Cardiac septum (tissue), 1 donor: ENCODE measurements at regions of chr12 and their contacts with region 1.

Region 1: DNA sequence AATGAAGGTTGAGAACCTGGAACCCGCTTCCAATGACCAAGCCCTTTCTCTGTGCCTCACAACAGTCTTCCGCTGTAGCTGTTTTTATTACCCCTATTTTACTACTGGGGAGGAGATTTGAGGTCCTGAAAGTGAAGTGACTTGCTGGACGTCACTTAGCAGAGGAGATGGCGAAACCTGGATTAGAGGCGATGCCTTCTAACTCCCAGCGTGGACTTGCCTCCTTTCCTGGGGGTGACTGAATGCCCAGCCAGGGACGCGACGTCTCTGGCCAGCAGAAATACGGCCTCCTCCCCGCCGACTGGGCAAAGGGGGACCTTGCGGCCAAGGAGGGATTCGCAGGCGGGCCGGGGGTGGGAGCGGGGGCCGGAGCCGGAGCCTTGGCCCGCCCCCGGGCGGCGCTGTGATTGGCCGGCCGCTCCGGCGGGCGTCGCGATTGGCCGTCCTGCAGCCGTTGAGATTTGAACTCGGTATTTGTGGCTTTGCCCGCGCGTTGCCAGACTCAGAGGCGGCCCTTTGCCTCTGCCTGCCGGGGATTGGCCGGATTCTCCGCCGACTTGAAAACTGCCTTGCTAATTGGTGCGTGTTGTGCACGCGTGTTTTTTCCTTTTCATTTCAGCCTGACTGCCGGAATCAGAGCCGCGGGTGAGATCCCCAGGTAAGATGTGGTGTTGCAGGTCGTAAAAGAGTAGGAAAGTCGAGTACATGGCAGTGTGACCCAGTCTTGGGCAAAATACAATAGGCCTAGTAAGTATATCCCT is at the start of gene NCAPD2:
- DNase-seq: peak; percentile 98
- total RNA-seq, gene NCAPD2: 12.0 TPM

Region 2: DNA sequence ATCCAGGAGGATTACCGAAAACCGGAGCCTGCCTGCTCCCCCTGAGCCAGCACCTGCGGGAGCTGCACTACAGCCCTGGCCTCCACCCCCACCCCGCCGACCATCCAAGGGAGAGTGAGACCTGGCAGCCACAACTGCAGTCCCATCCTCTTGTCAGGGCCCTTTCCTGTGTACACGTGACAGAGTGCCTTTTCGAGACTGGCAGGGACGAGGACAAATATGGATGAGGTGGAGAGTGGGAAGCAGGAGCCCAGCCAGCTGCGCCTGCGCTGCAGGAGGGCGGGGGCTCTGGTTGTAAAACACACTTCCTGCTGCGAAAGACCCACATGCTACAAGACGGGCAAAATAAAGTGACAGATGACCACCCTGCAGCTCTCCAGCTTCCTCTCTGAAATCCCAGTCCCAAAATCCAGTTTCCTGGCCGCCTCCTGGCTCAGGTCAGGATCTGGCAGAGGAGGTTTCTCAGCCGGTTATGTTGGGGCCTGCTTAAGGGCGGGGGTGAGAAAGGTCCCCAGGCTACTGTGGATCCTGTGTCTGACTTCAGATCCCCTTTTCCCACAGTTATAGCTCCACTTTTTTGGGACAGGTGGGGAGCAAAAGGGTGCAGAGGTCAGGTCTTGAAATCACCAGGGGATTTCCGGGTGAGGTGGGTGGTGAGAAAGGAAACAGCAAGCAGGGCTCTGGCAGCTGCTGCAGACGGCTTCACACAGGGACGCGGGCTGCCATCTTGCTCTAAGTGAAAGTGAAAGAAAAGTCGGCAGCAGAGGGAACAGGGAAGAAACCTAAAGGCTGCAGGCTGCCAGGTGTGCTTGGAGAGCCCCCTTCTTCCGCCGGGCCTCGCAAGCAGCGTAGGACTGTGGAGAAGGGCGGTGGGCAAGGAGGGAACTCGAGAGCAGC is 42.1 kb before region 1 on chr12 and contains the start of gene TAPBPL:
- intact Hi-C with region 1: loop called (anchors 2 kb)
- DNase-seq: peak; percentile 92
- total RNA-seq, gene TAPBPL: 17.2 TPM

Region 3: GRCh38 chr12:6752921-6753771 is 259.5 kb after region 1 on chr12 and contains the start of gene MLF2:
- intact Hi-C with region 1: no loop called
- DNase-seq: peak; percentile 99
- total RNA-seq, gene MLF2: 135 TPM